RWPE1 (cell line): ENCODE measurements at regions of chr1 and their contacts with region 1.

Region 1: GRCh38 chr1:86833461-86834215 is 80.3 kb downstream of the SELENOF start:
- DNase-seq: peak; percentile 68
- H3K27ac ChIP-seq: no peak overlapping the region
- CTCF ChIP-seq: peak; percentile 63

Region 2: GRCh38 chr1:87061742-87062156 is 228.1 kb after region 1 on chr1:
- CTCF ChIA-PET with region 1: no interaction called
- POLR2A ChIA-PET with region 1: no interaction called
- DNase-seq: peak; percentile 1
- H3K27ac ChIP-seq: no peak overlapping the region
- CTCF ChIP-seq: no peak

Region 3: DNA sequence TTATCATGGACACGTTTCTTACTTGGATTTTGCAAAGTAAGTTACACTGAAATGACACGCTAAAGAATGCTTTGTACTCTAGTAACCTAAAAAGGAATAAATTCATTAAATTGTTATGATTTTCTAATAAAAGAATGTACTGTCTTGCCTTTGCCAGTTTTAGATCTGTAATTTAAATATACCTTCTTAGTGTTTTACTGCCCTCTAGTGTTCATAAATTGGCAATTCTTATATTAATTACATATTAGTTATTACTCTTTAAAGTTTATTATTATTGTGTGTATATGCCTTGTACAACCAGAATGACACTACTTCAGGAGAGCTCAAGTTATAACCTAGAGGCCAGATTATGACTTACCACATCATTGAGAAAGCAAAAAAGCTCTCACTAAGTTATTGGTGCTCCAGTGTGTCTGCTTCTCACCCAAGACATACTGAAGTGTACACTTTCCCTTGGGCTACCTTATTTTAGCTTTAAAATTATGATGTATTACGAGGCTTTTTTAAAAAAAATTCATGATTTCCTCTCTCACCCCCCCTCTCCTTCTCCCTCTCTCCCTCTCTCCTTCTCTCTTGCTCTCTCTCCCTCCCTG is 250.7 kb after region 1 on chr1:
- CTCF ChIA-PET with region 1: interaction called, 14 read pairs
- POLR2A ChIA-PET with region 1: no interaction called
- DNase-seq: peak; percentile 13
- H3K27ac ChIP-seq: no peak overlapping the region
- CTCF ChIP-seq: peak; percentile 64